ENCODE measurements at regions of chr11 and their contacts with region 1.

Region 1: GRCh38 chr11:27401833-27402316 is 38.9 kb upstream of the CCDC34 start:
- DNase-seq: peak; percentile 73
- ATAC-seq: peak; percentile 89
- H3K4me3 ChIP-seq: peak overlapping the region; percentile 33; the same call in 1 of the 2 replicates
- H3K27ac ChIP-seq: peak overlapping the region; percentile 94
- H3K4me1 ChIP-seq: peaks cover 36% of the 10 kb centered on the region
- H3K27me3 ChIP-seq: no peaks in the 10 kb centered on the region
- CTCF ChIP-seq: no peak

Region 2: DNA sequence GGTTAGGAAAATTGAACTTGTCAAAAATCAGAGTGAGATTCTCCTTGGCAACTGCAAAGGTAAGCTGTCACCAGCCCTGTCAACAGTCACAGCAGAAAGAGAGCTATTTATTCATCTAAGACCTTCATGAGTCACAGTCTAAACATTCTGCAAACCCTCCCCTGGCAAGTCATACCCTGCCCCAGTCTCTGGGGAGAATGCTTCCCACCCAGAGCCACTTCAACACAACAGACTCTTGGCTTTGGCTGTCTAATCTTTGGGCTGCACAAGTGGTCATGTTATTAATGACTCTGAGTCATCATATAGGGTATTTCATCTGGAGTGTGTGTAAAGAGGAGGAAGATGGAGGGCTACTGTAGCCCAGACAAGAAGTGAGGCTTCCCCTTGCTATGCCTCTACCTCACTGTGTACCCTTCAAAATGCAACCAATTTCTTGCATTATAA is 192.3 kb before region 1 on chr11:
- CTCF ChIA-PET with region 1: no interaction called
- POLR2A ChIA-PET with region 1: no interaction called
- intact Hi-C with region 1: loop called (anchors 5 kb)
- DNase-seq: peak; percentile 96
- ATAC-seq: peak; percentile 82
- H3K4me3 ChIP-seq: no peak overlapping the region
- H3K27ac ChIP-seq: peak overlapping the region; percentile 65
- H3K4me1 ChIP-seq: peaks cover 46% of the 10 kb centered on the region
- H3K27me3 ChIP-seq: no peaks in the 10 kb centered on the region
- CTCF ChIP-seq: no peak

Region 3: DNA sequence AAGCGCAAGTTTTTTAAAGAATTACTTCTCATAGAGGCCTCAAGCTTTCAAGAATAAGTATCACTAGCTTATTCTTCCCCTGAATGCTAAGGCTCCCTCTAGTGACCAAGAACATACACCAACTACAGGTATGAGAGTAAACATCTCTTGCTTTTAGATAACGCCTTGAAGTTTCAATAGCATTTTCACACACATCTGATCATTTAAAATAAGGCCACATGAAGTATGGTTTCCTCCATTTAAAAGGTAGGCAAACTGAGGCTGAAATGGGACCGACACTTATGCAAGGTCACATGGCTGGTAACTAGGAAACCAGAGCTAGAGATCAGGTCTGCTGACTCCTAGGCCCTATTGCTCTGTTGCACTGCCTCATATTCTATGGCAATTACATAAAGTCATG is 105.4 kb before region 1 on chr11:
- CTCF ChIA-PET with region 1: no interaction called
- POLR2A ChIA-PET with region 1: no interaction called
- intact Hi-C with region 1: no loop called
- DNase-seq: peak; percentile 74
- ATAC-seq: peak; percentile 75
- H3K4me3 ChIP-seq: no peak overlapping the region
- H3K27ac ChIP-seq: no peak overlapping the region
- H3K4me1 ChIP-seq: peaks cover 17% of the 10 kb centered on the region
- H3K27me3 ChIP-seq: no peaks in the 10 kb centered on the region
- CTCF ChIP-seq: peak; percentile 87

Region 4: DNA sequence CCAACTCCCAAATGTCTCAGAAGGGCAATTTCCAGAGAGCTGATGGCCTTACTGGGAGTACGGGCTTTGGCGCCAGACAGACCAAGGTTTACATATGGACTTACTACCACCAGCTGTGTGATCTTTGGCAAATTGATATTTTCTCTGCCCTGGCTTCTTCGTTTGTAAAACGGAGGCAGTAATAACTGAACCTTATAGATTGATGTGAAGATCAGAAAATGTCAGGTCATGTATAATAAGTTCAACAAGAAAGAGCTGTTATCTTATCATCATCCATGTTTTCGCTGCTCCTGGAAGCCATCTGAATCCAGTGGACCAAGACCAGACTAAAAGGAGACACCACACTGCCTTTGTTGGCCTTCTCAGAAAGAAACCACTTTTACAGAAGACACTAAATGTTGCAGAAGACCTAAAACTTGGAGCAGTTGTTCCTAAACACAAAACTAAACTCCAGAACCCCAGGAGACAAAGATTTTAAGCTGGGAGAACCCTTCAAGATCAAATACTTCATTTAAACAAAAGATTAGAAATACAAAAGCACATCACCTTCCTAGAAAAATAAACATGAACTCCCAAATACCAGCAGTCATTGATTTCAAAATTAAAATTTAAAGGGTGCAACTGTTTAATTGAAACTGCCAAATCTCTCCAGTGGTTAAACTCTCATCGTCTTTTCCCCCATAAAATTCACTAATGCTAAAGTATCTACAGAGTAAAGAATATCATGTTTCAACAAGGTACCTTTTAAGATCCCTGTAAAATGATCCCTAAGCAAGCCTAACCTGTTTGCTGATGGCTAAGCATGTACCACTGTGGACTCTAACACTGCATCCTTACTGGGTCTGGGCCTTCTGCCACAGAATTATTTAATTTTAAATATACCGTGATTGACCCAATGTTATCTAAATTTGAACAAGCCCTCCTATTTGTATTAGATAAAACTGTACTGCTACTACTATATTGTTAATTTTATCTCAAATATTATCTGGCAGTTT is 14.6 kb after region 1 on chr11:
- CTCF ChIA-PET with region 1: no interaction called
- POLR2A ChIA-PET with region 1: no interaction called
- intact Hi-C with region 1: loop called (anchors 2 kb)
- DNase-seq: peak; percentile 75
- ATAC-seq: peak; percentile 97
- H3K4me3 ChIP-seq: no peak overlapping the region; the same call in 1 of the 2 replicates
- H3K27ac ChIP-seq: peak overlapping the region; percentile 63
- H3K4me1 ChIP-seq: peaks cover 37% of the 10 kb centered on the region
- H3K27me3 ChIP-seq: no peaks in the 10 kb centered on the region
- CTCF ChIP-seq: no peak

Region 5: DNA sequence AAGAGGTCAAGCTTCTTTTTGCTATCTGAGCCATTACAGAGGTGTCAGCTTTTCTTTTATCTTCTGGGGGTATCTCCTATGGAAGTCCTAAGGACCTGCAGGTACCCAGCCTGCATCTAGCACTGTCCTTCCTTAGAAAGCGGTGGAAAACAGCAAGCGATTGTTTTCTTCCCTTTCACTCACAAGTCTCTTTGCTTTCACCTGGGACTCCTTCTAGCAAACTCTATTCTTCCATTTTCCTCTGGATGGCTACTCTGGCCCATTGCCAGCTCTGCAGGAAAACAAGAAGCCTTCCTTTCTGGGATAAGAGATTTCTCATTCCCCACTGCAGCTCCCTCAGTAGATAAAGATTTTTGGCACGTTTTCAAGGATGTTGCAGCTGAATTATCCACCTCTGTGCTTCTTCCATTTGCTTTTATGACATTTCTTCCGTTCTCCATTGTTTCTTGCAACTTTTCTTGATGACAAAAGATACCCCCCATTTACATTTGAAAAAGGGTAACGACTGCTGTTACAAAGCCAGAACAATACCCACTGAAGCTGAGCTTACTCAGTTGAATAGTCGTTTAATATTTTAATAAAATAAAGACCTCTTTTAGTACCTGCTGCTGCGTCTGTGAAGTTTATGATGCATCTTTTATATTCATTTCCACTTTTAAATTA is 338.6 kb after region 1 on chr11:
- CTCF ChIA-PET with region 1: no interaction called
- POLR2A ChIA-PET with region 1: no interaction called
- intact Hi-C with region 1: no loop called
- DNase-seq: no peak
- ATAC-seq: no peak
- H3K4me3 ChIP-seq: no peak overlapping the region
- H3K27ac ChIP-seq: no peak overlapping the region
- H3K4me1 ChIP-seq: no peaks in the 10 kb centered on the region
- H3K27me3 ChIP-seq: no peaks in the 10 kb centered on the region
- CTCF ChIP-seq: no peak

Measured in PC-3 (cell line).